ENCODE measurements at regions of chr1 and their contacts with region 1.

Region 1: DNA sequence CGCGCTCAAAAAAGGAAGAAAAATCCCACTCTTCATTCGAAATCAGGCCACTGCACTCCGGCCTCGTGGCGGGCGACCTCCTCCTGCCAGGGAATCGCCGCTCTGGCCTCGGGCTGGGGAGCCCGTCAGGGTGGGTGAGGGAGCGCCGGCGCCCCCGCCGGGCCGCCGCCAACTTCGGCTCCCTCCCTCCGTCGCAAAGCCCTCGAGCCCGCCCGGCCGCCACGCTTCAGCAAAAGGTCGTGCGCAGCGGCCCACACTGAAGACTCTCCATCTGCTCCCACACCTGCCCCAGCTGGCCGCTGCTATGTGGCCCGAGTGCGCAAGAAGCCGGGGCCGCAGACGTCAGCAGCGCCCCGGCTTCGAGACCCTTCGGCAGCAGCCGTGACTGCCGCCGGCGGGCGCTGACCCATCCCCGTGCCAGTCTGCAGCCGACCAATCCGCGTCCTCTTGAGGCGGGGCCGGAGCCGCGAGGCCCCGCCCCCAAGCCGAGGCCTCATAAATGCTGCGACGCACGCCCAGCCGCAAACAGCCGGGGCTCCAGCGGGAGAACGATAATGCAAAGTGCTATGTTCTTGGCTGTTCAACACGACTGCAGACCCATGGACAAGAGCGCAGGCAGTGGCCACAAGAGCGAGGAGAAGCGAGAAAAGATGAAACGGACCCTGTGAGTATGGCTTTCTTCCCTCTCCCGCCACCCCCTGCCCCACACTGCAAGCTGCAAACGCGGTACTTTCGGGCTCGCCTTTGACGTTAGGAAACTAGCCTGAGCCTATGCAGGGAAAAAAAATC is at the start of gene RGS2:
- DNase-seq: peak; percentile 98
- total RNA-seq, gene RGS2: 13.5 TPM

Region 2: DNA sequence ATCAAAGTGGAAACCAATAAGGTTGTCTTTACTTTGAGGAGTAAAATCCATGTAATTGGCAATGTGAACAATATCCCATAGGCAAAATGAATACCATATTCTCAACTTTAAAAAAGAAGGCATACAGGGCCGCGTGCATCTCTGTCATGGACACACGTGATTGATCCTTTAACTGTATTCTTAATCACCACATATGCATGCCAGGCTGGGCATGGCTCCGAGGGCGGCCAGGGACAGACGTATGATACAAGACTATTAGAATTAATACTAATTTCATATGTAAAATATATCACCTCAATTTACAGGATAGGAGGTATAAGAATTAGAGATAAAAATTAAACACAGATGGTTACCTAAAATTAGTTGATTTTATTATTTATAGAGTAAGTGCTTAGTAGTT is 480.7 kb before region 1 on chr1:
- intact Hi-C with region 1: no loop called
- DNase-seq: no peak

Region 3: GRCh38 chr1:192477630-192478029 is 331.1 kb before region 1 on chr1:
- intact Hi-C with region 1: loop called (anchors 2 kb)
- DNase-seq: no peak

Region 4: DNA sequence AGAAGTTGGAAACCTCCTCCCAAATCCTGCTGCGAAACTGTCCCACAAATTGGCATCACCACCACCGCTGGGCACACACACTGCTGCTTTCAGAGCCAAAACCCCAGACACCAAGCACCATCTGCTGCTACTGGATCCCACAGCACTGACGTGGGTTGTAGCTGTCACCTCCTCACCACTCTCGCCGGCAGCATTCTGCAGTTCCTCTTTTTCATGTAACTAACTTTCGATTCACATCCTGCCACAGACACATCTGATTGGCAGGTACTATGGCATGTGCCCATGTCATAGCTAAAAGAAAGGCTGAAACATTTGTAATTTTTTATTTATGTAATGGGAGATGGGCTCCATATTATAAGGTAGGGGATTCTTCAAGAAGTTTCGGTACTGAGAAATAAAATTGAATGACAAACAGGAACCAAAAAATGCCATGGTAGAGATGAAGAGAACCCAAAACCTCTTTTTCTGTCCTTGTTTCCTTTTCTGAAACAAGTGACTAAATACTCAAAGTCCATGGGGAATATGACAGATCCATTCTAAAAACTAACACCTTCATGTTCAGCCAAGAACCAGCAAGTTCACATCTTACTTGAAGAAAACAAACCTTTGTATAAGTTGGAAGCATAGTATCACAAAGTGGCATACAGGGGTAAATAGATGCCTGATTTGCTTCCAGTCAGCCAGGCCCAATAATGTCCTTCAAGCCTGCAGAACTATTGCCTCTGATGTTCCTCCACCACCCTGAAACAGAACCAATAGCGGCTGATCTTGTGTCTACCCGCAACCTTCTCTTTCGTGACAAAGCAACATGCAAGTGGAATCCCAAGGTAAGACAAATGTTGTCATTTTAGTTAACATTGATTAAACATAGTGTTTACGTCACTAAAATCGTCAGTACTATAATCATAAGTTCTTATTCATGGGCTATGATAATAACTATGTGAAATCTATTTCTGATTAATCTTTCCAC is 199.3 kb before region 1 on chr1:
- intact Hi-C with region 1: loop called (anchors 10 kb)
- DNase-seq: peak; percentile 81

Region 5: DNA sequence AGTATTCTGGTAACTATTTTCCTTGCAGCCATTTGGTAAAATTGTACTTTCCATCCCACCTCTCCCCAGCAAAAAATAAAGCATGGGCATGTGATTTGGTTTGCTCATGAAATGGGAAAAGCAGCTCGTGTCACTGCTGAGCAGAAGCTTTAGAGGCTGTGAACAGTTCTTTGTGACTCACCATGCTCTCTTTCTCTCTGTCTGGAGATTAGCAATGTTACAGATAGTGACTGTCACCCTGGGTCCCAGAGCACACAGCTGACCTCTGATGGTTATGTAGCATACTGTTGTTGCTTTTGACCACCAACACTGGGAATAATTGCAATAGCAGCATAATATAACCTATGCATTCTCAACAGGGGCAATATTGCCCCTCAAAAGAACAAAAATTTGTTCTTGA is 70.7 kb after region 1 on chr1:
- intact Hi-C with region 1: loop called (anchors 2 kb)
- DNase-seq: no peak

Region 6: GRCh38 chr1:192998536-192998935 is 189.8 kb after region 1 on chr1:
- intact Hi-C with region 1: no loop called
- DNase-seq: no peak

Region 7: DNA sequence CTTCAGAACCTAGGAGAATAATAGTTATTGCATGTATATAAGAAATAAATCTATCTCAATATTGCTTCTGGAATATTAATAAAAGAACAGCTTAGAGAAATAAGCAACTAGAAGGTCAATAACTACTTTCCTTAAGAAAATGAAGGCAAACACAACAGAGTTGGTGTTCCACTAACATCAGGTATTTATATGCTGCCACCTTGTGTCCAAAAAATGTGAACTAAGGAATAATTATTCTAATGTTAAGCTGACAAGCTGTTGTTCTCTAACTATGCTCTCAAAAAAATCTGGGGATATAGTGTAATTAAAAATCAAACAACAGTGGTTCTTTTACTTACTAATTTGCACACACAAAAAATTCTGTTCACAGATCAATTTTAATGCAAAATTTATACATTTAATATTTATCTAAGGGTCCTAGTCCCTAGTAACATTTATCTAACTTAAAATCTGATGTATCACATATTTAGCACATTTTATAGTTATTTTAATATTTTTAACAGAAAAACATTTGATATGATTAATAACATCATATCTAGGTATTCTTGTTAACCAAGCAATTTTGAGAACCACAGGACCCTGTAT is 210.8 kb after region 1 on chr1:
- intact Hi-C with region 1: loop called (anchors 5 kb)
- DNase-seq: no peak

Region 8: GRCh38 chr1:193121616-193122593 is 313.2 kb after region 1 on chr1 and contains the start of gene CDC73:
- intact Hi-C with region 1: loop called (anchors 5 kb)
- DNase-seq: peak; percentile 99
- total RNA-seq, gene CDC73: 57.7 TPM